ENCODE measurements at regions of chr17 and their contacts with region 1.

Region 1: GRCh38 chr17:44775136-44775837 is 16.5 kb downstream of the ADAM11 start:
- DNase-seq: peak; percentile 97 to 99
- H3K4me3 ChIP-seq: peak overlapping the region; percentile 55 to 87 (median 70)
- H3K27ac ChIP-seq: peak overlapping the region in 4 of 5 donors; percentile 5 to 82 (median 53)
- H3K4me1 ChIP-seq: peaks cover 24 to 37% (median 33%) of the 10 kb centered on the region in 4 donors
- H3K27me3 ChIP-seq: peaks cover 0 to 53% (median 18%) of the 10 kb centered on the region in 3 donors
- CTCF ChIP-seq: no peak
- EP300 ChIP-seq: no peak
- POLR2A ChIP-seq: no peak

Region 2: DNA sequence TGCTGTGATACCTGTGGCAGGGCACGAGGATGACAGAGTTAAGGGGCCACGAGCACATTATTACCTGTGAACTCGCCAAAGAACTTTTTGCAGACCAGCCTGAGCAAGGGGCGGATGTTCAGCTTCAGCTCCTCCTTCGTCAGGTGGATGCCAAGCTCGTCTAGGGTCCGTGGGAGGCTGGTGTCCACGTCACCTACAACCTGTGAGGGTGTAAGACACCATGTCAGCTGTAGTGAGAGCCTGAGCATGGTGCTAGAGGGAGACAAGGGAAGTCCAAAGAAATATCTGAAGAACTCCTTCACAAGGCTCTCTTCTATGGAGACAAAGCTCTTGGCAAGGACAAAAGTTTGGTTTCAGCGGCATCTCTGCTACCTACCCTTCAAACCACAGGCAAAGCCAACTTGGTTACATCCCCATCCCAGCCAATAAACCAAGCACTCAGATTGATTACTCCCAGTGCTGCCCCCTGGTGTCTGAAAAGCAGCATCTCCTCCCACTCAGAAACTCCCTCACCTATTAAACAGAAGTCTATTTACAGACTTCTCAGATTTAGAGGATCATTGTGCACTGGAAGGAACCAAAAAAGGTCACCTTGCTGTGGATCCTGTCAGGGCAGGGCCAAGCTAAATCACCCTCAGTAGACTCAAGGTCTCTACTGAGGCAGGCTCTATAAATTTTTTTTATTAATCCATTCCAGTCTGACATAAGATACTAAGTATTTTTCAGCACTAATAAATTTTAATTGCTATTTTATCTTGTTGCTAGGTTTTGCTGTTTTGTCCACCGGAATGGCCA is 89.8 kb after region 1 on chr17:
- intact Hi-C with region 1: loop called (anchors 5 kb)
- DNase-seq: peak; percentile 66 to 91
- H3K4me3 ChIP-seq: no peak overlapping the region
- H3K27ac ChIP-seq: peak overlapping the region in 1 of 5 donors; percentile 4
- H3K4me1 ChIP-seq: peaks cover 0 to 5% (median 0%) of the 10 kb centered on the region in 4 donors
- H3K27me3 ChIP-seq: no peaks in the 10 kb centered on the region
- CTCF ChIP-seq: peak in 5 of 7 experiments; percentile 67 to 87 (median 85)
- EP300 ChIP-seq: no peak
- POLR2A ChIP-seq: no peak

Region 3: GRCh38 chr17:45021607-45022287 is 246.5 kb after region 1 on chr17:
- intact Hi-C with region 1: loop called (anchors 10 kb)
- DNase-seq: peak; percentile 68 to 89
- H3K4me3 ChIP-seq: peak overlapping the region; percentile 34 to 52 (median 44)
- H3K27ac ChIP-seq: peak overlapping the region; percentile 34 to 78 (median 72)
- H3K4me1 ChIP-seq: peaks cover 37 to 52% (median 43%) of the 10 kb centered on the region in 4 donors
- H3K27me3 ChIP-seq: peaks cover 0 to 37% (median 13%) of the 10 kb centered on the region in 3 donors
- CTCF ChIP-seq: peak in 5 of 7 experiments; percentile 28 to 98 (median 93)
- EP300 ChIP-seq: no peak
- POLR2A ChIP-seq: no peak

Measured in stomach (tissue), 19 donors.